Sigmoid colon (tissue), 7 donors: ENCODE measurements at regions of chr6 and their contacts with region 1.

Region 1: DNA sequence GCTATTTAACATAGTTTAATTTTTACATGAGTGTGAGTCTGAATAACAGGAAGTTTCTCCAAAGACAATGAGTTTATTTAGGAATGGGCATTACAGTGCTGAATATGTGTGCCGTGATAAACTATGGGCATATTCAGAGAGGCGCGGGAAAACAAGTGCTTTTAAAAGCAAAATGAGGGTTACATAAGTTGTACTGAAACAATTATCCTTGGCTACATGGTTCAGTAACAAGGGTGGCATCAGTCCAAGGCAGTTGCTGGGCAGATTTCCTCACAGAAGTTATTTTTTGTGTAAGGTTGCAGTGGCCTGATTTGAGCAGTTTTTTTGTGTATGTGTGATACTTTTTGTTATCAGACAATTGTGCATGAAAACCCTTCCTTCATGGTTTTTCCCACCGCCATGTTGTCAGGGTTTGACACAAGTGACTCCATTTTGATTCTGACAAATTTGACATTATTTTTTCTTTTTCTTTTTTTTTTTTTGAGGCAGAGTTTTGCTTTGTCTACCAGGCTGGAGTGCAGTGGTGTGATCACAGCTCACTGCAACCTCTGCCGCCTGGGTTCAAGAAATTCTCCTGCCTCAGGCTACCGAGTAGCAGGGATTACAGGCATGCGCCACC is 22.3 kb upstream of the PXDC1 start:
- DNase-seq: no peak
- H3K4me3 ChIP-seq: no peak overlapping the region
- H3K27ac ChIP-seq: no peak overlapping the region
- H3K4me1 ChIP-seq: no peaks in the 10 kb centered on the region
- H3K27me3 ChIP-seq: no peaks in the 10 kb centered on the region
- CTCF ChIP-seq: no peak
- EP300 ChIP-seq: no peak
- POLR2A ChIP-seq: no peak

Region 2: DNA sequence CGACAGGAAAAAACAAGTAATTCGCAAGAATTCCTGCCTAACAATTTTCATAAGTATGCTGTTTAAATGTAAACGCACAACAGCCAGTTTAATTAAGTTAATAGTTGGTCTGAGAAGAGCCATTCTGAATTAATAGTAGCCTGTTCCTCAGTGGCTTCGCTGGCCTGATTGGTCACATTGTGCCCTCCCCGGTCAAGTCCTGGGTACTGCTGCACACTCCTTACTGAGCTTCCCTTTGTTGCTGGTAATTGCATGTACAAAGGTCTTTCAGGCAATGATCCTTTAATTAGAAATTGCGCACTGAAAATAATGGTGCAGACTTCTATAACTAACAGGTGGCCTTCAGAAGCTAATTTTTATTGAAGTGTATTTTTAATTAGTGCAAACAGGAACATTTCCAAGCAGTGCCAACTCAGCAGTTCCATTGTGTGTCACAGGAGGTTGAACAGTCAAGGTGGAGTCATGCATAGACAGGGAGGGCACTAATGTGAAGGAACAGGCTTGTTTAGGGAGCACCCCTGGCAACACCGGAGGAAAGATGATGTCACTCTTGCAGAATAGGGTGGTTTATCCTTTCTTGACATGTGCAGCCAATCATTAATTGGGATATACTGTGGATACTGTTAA is 224.4 kb before region 1 on chr6:
- intact Hi-C with region 1: no loop called
- DNase-seq: no peak
- H3K4me3 ChIP-seq: no peak overlapping the region
- H3K27ac ChIP-seq: no peak overlapping the region
- H3K4me1 ChIP-seq: no peaks in the 10 kb centered on the region
- H3K27me3 ChIP-seq: no peaks in the 10 kb centered on the region
- CTCF ChIP-seq: no peak
- EP300 ChIP-seq: no peak
- POLR2A ChIP-seq: no peak

Region 3: DNA sequence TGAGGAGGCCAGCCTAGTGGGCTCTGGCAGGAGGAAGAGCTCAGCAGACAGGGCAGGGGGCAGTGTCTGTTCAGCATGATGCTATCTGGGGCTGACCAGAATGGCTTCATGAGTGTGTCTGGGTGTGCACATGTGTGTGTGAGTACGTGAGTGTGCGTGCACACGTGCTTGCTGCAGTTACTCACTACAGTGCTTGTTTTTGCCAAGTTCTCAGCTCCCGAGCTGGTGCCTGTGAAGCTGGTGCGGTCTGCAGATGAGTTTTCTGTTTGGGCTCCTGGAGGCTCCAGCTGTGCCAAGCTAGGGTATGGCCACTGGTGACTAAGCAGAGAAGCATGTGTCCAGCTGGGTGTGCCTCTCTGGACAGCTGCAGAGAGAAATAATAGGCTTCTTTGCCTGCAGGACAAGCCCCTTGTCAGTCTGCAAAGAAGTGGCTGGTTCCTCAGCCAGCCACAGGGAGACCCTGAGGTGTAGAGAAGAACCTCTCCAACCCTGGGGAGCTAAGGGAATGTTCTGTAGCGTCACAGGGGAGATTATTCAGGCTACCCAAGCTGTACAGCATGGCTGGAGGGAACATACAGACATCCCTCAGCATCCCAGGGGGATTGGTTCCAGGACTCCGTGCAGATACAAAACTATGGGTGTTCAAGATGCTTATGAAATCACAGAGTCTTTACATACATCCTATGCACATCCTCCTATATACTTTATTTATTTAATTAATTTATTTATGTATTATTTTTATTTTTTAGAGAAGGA is 35.1 kb after region 1 on chr6:
- intact Hi-C with region 1: loop called (anchors 5 kb)
- DNase-seq: peak; percentile 83
- H3K4me3 ChIP-seq: no peak overlapping the region
- H3K27ac ChIP-seq: peak overlapping the region; percentile 30 to 73 (median 54)
- H3K4me1 ChIP-seq: peaks cover 0 to 27% (median 21%) of the 10 kb centered on the region in 4 donors
- H3K27me3 ChIP-seq: no peaks in the 10 kb centered on the region
- CTCF ChIP-seq: no peak
- EP300 ChIP-seq: no peak
- POLR2A ChIP-seq: no peak